Activated CD4-positive, alpha-beta T cell treated with anti-CD3 and anti-CD28 coated beads for 36 hours (primary cell): ENCODE measurements at regions of chr12 and their contacts with region 1.

Region 1: DNA sequence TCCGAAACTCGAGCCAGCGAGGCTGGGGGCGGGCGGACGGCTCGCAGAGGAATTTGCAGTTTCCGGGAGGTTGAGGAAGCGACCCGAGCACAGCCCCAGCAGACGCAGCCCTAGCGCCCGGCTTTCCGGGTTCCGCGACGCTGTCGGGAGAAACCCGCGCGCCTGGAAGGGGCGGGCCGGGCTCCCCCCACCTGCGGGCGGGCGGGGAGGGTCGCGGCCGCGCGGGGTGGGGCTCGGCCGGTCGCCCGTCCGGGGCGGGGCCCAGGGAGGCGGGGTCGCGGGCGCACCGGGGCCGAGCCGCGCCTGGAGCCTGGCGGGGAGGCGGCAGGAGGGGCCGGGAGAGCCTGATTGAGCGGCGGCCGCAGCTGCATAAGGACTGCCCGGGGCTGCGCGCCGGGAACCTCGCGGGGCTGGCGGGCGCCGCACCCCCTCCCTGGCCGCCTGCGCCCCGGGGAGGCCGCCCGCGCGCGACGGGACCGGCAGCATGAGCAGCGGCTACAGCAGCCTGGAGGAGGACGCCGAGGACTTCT is at the start of gene RASSF3:
- DNase-seq: peak; percentile 85
- ATAC-seq: peak; percentile 63
- H3K4me3 Mint-ChIP-seq: peak within 1 kb of the TSS; percentile 80
- H3K27ac Mint-ChIP-seq: peak within 1 kb of the TSS; percentile 92
- H3K4me1 Mint-ChIP-seq: peaks cover 36% of the 10 kb centered on the region
- H3K27me3 Mint-ChIP-seq: no peaks in the 10 kb centered on the region
- total RNA-seq, gene RASSF3: 38.0 to 39.0 TPM

Region 2: DNA sequence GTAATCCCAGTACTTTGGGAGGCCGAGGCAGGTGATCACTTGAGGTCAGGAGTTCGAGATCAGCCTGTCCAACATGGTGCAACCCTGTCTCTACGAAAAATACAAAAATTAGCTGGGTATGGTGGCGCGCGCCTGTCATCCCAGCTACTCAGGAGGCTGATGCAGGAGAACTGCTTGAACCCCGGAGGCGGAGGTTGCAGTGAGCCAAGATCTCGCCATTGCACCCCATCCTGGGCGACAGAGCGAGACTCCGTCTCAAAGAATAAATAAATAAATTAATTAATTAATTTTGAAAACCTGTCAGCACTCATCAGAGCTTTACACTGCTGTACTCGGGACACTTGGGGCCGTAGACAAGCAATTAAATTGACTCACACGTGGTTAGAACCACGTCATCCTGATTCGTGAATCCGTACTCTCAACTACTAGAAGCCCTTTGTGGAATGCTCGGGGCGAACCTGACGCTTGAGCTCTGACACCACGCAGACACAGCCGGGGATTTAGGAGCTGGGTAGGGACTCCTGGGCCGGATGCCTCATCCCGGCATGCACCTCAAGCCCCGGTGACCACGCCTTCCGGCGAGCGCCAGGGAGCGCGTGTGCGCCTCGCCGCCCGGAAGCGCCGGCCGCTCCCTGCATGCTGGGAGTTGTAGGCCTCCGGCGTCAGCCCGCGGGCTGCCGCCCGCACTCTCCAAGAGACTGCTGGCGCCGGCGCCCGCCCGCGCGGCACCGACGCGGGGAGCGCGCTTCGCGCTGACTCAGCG is 206.3 kb before region 1 on chr12 and contains the start of gene XPOT:
- CTCF ChIA-PET with region 1: no interaction called
- POLR2A ChIA-PET with region 1: no interaction called
- intact Hi-C with region 1: loop called in 1 of 2 experiments (anchors 1 kb)
- DNase-seq: peak; percentile 97
- ATAC-seq: peak; percentile 90
- H3K4me3 Mint-ChIP-seq: peak within 1 kb of the TSS; percentile 97
- H3K27ac Mint-ChIP-seq: peak within 1 kb of the TSS; percentile 96
- H3K4me1 Mint-ChIP-seq: peaks cover 38% of the 10 kb centered on the region
- H3K27me3 Mint-ChIP-seq: no peaks in the 10 kb centered on the region
- total RNA-seq, gene XPOT: 179 to 187 TPM

Region 3: DNA sequence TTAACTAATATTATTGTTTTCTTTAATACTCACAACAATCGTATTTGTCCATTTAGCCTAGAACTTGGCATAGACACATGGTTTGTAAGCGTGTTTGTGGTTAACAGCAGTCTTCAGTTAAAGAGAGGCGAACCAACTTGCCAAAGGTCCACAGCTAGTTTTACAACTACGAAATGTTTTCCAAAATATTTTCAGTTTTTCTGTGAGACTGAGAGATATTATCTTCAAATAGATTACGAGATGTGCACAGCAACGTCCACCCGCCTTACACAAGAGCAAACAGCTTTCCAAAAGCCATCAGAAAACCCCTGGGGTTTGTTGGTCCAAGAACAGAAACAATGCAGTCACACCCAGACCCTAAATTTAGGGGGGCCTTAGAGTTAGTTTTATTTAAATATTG is 58.5 kb before region 1 on chr12:
- CTCF ChIA-PET with region 1: interaction called, 31 read pairs
- POLR2A ChIA-PET with region 1: no interaction called
- intact Hi-C with region 1: loop called (anchors 1 kb)
- DNase-seq: no peak
- ATAC-seq: no peak
- H3K4me3 Mint-ChIP-seq: no peak overlapping the region
- H3K27ac Mint-ChIP-seq: no peak overlapping the region
- H3K4me1 Mint-ChIP-seq: peaks cover 6% of the 10 kb centered on the region
- H3K27me3 Mint-ChIP-seq: no peaks in the 10 kb centered on the region

Region 4: GRCh38 chr12:64669270-64669842 is 59.1 kb after region 1 on chr12:
- CTCF ChIA-PET with region 1: interaction called, 4 read pairs
- POLR2A ChIA-PET with region 1: interaction called, 4 read pairs
- intact Hi-C with region 1: loop called (anchors 2 kb)
- DNase-seq: peak; percentile 49
- ATAC-seq: peak; percentile 78
- H3K4me3 Mint-ChIP-seq: peak overlapping the region; percentile 82
- H3K27ac Mint-ChIP-seq: peak overlapping the region; percentile 98
- H3K4me1 Mint-ChIP-seq: peaks cover 93% of the 10 kb centered on the region
- H3K27me3 Mint-ChIP-seq: no peaks in the 10 kb centered on the region

Region 5: GRCh38 chr12:64759035-64759901 is 149.1 kb after region 1 on chr12 and contains the start of gene GNS:
- CTCF ChIA-PET with region 1: no interaction called
- POLR2A ChIA-PET with region 1: no interaction called
- intact Hi-C with region 1: loop called in 1 of 2 experiments (anchors 1 kb)
- DNase-seq: peak; percentile 97
- ATAC-seq: peak; percentile 88
- H3K4me3 Mint-ChIP-seq: peak within 1 kb of the TSS; percentile 88
- H3K27ac Mint-ChIP-seq: peak within 1 kb of the TSS; percentile 96
- H3K4me1 Mint-ChIP-seq: peaks cover 46% of the 10 kb centered on the region
- H3K27me3 Mint-ChIP-seq: no peaks in the 10 kb centered on the region
- total RNA-seq, gene GNS: 19.9 to 21.9 TPM

Region 6: GRCh38 chr12:64858882-64859605 is 248.8 kb after region 1 on chr12:
- CTCF ChIA-PET with region 1: no interaction called
- POLR2A ChIA-PET with region 1: no interaction called
- intact Hi-C with region 1: no loop called
- DNase-seq: no peak
- ATAC-seq: no peak
- H3K4me3 Mint-ChIP-seq: no peak overlapping the region
- H3K27ac Mint-ChIP-seq: no peak overlapping the region
- H3K4me1 Mint-ChIP-seq: peaks cover 2% of the 10 kb centered on the region
- H3K27me3 Mint-ChIP-seq: peaks cover 6% of the 10 kb centered on the region